Cardiac septum (tissue), 1 donor: ENCODE measurements at regions of chr10 and their contacts with region 1.

Region 1: GRCh38 chr10:26269754-26270153 is 53.2 kb downstream of the GAD2 start:
- DNase-seq: no peak

Region 2: GRCh38 chr10:25875556-25876165 is 394.1 kb before region 1 on chr10:
- intact Hi-C with region 1: loop called (anchors 5 kb)
- DNase-seq: no peak

Region 3: DNA sequence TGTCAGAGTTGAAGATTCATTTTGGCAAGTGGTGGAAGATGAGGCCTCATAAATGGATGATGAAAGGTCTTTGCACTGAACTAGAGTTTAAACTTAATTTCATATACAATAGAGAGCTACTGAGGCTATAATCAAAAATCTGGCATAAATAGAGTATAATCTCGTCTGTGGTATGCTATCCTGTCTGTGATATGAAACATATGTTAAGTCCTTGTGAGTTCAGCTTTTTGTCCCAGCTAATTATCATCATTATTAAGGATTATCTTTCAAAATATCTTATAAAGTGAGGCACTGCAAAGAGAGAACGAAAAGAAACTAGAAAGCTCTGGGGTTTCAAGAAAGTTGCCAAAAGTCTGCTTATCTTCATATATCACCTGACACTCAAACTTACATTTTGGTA is 30.2 kb after region 1 on chr10:
- intact Hi-C with region 1: no loop called
- DNase-seq: no peak

Region 4: GRCh38 chr10:26310361-26310760 is 40.6 kb after region 1 on chr10:
- intact Hi-C with region 1: no loop called
- DNase-seq: no peak